ENCODE measurements at regions of chr7 and their contacts with region 1.

Region 1: DNA sequence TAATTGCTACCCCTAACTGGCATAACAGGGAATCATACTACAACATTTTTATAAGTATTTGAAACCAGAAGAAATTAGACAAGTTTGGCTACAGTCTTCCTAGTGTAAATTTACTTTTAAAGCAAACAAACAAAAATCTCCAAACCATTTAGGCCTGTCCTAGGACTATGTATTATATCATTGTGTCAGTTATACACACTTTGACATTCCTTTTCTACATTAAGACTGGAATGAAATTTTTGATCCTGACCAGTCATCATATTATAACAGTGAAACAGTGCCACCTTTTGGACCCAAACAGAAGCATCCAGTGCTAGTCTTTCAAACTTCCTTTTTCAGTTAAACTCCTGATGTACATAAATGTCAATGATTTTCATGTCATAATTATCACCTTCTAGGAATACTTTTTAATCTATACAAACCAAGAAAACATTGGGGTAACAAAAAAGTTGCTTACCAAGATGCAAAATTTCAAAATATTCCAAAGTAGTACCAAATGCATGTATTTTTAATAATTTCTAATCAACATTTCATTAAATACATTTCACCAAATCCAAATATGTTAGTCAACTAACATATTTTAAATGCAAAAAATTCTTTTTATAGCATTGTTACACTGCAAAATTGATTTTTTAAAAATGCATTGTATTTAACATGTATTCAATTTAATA is 75.7 kb downstream of the IMMP2L start:
- DNase-seq: peak; percentile 74
- ATAC-seq: peak; percentile 75
- H3K4me3 ChIP-seq: no peak overlapping the region
- H3K27ac ChIP-seq: peak overlapping the region; percentile 87
- H3K4me1 ChIP-seq: peaks cover 24% of the 10 kb centered on the region
- H3K27me3 ChIP-seq: no peaks in the 10 kb centered on the region
- CTCF ChIP-seq: peak; percentile 82

Region 2: GRCh38 chr7:110090110-110090769 is 1396.4 kb before region 1 on chr7:
- CTCF ChIA-PET with region 1: no interaction called
- POLR2A ChIA-PET with region 1: no interaction called
- intact Hi-C with region 1: loop called (anchors 1 kb)
- DNase-seq: peak; percentile 64
- ATAC-seq: peak; percentile 76
- H3K4me3 ChIP-seq: no peak overlapping the region
- H3K27ac ChIP-seq: no peak overlapping the region
- H3K4me1 ChIP-seq: no peaks in the 10 kb centered on the region
- H3K27me3 ChIP-seq: no peaks in the 10 kb centered on the region
- CTCF ChIP-seq: peak; percentile 60

Region 3: GRCh38 chr7:111098011-111098925 is 388.3 kb before region 1 on chr7:
- CTCF ChIA-PET with region 1: no interaction called
- POLR2A ChIA-PET with region 1: no interaction called
- intact Hi-C with region 1: loop called (anchors 2 kb)
- DNase-seq: peak; percentile 73
- ATAC-seq: peak; percentile 86
- H3K4me3 ChIP-seq: peak overlapping the region; percentile 41; the same call in 1 of the 2 replicates
- H3K27ac ChIP-seq: peak overlapping the region; percentile 95
- H3K4me1 ChIP-seq: peaks cover 30% of the 10 kb centered on the region
- H3K27me3 ChIP-seq: no peaks in the 10 kb centered on the region
- CTCF ChIP-seq: peak; percentile 86

Region 4: DNA sequence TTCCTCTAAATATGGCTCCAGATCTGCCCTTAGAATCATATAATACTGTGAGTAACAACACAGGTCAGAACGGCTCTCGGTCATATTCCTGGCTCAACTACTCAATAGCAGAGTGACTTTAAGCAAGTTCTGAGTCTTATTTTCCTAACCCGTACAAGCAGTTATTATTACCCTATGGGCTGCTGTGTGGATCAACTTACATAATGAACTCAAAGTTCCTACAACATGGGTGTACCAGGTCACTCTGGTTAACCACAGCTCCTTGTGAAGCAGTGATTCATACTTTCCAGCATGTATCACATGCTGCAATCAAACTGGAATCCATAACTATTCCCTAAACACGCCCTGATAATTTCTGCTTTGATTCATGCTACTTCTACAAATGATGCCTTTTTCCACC is 288.4 kb before region 1 on chr7:
- CTCF ChIA-PET with region 1: no interaction called
- POLR2A ChIA-PET with region 1: no interaction called
- intact Hi-C with region 1: loop called (anchors 1 kb)
- DNase-seq: peak; percentile 96
- ATAC-seq: peak; percentile 96
- H3K4me3 ChIP-seq: no peak overlapping the region
- H3K27ac ChIP-seq: peak overlapping the region; percentile 86
- H3K4me1 ChIP-seq: peaks cover 28% of the 10 kb centered on the region
- H3K27me3 ChIP-seq: no peaks in the 10 kb centered on the region
- CTCF ChIP-seq: no peak

Region 5: GRCh38 chr7:111308691-111309090 is 177.9 kb before region 1 on chr7:
- CTCF ChIA-PET with region 1: no interaction called
- POLR2A ChIA-PET with region 1: no interaction called
- intact Hi-C with region 1: no loop called
- DNase-seq: no peak
- ATAC-seq: no peak
- H3K4me3 ChIP-seq: no peak overlapping the region
- H3K27ac ChIP-seq: no peak overlapping the region
- H3K4me1 ChIP-seq: no peaks in the 10 kb centered on the region
- H3K27me3 ChIP-seq: no peaks in the 10 kb centered on the region
- CTCF ChIP-seq: no peak

Region 6: DNA sequence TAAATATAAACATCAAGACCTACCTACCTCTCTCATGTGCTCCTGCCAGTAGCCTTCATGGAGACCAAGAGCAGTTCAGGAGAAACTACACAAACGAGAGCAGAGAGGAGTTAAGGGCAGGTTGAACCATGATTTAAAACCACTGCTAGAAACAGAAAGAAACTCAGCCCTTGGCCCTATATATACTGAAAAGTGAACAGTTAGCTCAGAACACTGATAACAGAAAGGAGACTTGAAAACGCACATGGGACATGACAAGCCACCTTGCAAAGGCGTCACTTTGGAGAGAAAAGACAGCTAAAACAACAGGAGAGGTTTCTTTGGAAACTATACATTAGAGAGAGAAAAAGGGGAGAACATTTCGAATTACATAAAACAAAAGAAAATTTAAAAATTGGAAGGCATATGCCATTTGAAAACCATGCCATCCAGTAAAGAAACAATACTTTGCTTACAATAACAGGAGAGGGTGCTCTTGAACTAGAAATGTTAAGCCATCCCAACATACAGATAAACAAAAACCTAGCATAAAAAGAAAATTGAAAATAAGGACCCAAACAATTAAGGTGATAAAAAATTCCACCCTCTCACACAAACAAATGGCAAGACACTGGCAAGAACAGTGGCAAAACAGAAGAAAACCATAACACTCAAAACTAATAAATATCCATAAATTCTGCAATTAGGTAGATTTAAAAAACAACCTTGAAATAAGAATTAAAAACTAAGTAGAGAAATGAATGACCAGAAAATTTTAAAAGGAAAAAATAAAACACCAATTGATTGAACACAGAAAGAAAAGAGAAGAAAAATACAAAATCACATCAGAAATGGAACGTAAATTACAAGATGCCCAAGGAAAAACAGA is 157.0 kb before region 1 on chr7:
- CTCF ChIA-PET with region 1: no interaction called
- POLR2A ChIA-PET with region 1: no interaction called
- intact Hi-C with region 1: loop called (anchors 1 kb)
- DNase-seq: peak; percentile 21
- ATAC-seq: peak; percentile 69
- H3K4me3 ChIP-seq: no peak overlapping the region
- H3K27ac ChIP-seq: no peak overlapping the region
- H3K4me1 ChIP-seq: 0 out of 2 replicates have a peak, but pooled peaks cover 4% of the 10 kb centered on the region
- H3K27me3 ChIP-seq: no peaks in the 10 kb centered on the region
- CTCF ChIP-seq: peak; percentile 55

Region 7: GRCh38 chr7:111460695-111461094 is 25.9 kb before region 1 on chr7:
- CTCF ChIA-PET with region 1: no interaction called
- POLR2A ChIA-PET with region 1: no interaction called
- intact Hi-C with region 1: no loop called
- DNase-seq: no peak
- ATAC-seq: no peak
- H3K4me3 ChIP-seq: no peak overlapping the region
- H3K27ac ChIP-seq: no peak overlapping the region
- H3K4me1 ChIP-seq: no peaks in the 10 kb centered on the region
- H3K27me3 ChIP-seq: no peaks in the 10 kb centered on the region
- CTCF ChIP-seq: no peak

Region 8: DNA sequence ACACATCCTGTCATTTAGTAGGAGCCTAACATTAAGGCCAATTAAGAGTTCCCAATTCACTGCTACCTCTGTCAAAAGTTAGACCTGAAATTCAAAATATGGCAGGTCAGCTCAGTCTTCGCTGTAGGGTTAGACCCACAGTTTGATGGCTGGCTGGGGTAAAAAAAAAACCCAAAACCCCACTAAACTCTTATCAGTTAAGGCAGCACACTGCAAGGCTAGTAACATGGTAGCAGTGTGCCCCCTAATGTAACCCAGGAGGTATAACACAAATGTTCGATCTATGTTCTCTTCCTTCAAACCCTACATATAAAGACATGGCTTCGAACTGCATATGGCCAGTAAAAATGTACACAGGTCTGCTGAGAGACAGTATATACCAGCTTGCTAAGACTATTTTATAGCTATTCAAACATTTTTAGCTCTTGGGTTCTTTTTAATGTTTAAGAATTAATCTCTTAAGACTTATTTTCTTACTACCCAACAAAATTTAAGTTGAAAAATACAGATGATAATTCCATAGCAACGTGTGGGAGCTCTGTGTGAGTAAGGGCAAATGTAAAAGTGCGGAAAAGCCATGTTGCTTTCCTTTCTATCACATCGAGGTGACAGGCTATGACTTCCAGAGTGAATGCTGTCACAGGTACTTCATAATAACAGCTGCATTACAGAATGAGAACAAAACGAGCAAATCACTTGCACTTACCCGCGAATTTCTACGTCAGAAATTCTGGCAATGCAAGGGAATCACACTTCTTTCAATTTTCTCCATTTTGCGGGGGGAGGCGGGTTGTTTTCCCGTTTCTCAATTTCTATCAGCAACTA is 244.1 kb after region 1 on chr7:
- CTCF ChIA-PET with region 1: no interaction called
- POLR2A ChIA-PET with region 1: no interaction called
- intact Hi-C with region 1: loop called (anchors 1 kb)
- DNase-seq: peak; percentile 58
- ATAC-seq: peak; percentile 85
- H3K4me3 ChIP-seq: no peak overlapping the region
- H3K27ac ChIP-seq: peak overlapping the region; percentile 31; the same call in 1 of the 2 replicates
- H3K4me1 ChIP-seq: peaks cover 3% of the 10 kb centered on the region; the same call in 1 of the 2 replicates
- H3K27me3 ChIP-seq: no peaks in the 10 kb centered on the region
- CTCF ChIP-seq: peak; percentile 76

Region 9: GRCh38 chr7:111735661-111736551 is 249.3 kb after region 1 on chr7:
- CTCF ChIA-PET with region 1: no interaction called
- POLR2A ChIA-PET with region 1: no interaction called
- intact Hi-C with region 1: loop called (anchors 1 kb)
- DNase-seq: peak; percentile 85
- ATAC-seq: peak; percentile 71
- H3K4me3 ChIP-seq: no peak overlapping the region
- H3K27ac ChIP-seq: peak overlapping the region; percentile 10; the same call in 1 of the 2 replicates
- H3K4me1 ChIP-seq: peaks cover 13% of the 10 kb centered on the region
- H3K27me3 ChIP-seq: no peaks in the 10 kb centered on the region
- CTCF ChIP-seq: peak; percentile 85

Measured in PC-3 (cell line).